ENCODE measurements at regions of chr6 and their contacts with region 1.

Region 1: GRCh38 chr6:17673543-17674254 is 33.0 kb downstream of the NUP153 start:
- DNase-seq: no peak
- H3K4me3 Mint-ChIP-seq: no peak overlapping the region
- H3K27ac Mint-ChIP-seq: peak overlapping the region; percentile 73
- H3K4me1 Mint-ChIP-seq: peaks cover 35% of the 10 kb centered on the region
- H3K27me3 Mint-ChIP-seq: no peaks in the 10 kb centered on the region

Region 2: DNA sequence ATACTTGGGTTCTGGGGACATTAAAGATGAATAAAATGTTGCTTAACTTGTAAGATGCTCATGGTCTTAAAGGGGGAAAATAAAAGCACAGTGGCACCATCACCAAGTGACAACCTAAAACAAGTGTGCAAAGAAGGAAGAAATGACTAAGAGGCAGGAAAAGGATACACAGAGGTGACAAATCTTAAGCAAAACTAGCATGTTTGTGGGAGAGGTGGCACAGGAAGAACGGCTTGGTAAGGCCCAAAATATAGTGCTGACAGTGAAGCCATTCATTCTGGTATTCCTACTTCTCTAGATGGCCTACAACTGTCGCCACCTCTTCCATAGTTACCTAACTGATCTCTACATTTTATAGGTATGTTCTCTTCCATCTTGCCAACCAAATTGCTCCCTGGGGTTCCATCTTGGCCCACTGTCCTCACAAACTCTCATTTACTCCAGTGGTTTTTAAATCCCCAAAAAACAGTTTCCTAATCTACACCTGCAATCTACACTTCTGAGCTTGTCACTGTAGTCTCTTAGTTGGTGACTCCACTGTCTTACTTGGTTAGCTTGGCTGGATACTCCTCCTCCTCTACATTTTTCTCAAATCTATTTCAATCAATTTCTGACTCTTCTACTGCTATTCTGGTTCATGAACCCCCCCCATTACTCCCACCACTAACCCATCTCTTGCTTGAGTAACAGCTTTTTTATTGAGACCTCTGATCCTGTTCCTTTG is 40.1 kb before region 1 on chr6:
- CTCF ChIA-PET with region 1: no interaction called
- POLR2A ChIA-PET with region 1: no interaction called
- intact Hi-C with region 1: loop called (anchors 1 kb)
- DNase-seq: peak; percentile 52
- H3K4me3 Mint-ChIP-seq: peak overlapping the region; percentile 1
- H3K27ac Mint-ChIP-seq: peak overlapping the region; percentile 75
- H3K4me1 Mint-ChIP-seq: peaks cover 48% of the 10 kb centered on the region
- H3K27me3 Mint-ChIP-seq: no peaks in the 10 kb centered on the region

Region 3: DNA sequence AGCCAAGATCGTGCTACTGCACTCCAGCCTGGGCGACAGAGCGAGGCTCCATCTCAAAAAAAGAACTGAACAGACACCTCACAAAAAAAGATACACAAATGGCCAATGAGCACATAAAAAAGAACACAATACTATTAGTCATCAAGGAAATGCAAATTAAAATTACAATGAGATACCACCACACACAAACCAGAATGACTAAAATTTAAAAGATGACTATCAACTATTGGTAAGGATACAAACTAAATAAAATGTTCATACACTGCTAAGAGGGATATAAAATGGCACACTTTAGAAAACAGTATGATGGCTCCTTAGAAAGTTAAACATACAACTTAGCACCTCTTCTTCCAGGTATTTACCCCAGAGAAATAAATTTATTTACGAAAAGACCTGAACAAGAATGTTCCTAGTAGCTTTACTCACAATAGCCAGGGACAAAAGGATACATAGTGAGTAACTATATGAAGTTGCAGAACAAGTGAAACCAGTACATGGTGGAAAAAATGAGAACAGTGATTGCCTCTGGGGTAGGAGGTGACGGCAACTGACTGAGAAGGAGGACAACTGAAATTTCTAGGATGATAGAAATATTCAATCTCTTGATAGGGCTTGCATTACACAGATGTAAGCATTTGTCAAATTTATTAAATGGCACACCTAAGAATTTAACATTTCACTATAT is 20.4 kb before region 1 on chr6:
- CTCF ChIA-PET with region 1: no interaction called
- POLR2A ChIA-PET with region 1: no interaction called
- intact Hi-C with region 1: loop called (anchors 1 kb)
- DNase-seq: no peak
- H3K4me3 Mint-ChIP-seq: no peak overlapping the region
- H3K27ac Mint-ChIP-seq: peak overlapping the region; percentile 72
- H3K4me1 Mint-ChIP-seq: peaks cover 31% of the 10 kb centered on the region
- H3K27me3 Mint-ChIP-seq: no peaks in the 10 kb centered on the region

Measured in activated CD4-positive, alpha-beta memory T cell treated with anti-CD3 and anti-CD28 coated beads for 36 hours (primary cell).